PC-9 (cell line): ENCODE measurements at regions of chr20 and their contacts with region 1.

Region 1: DNA sequence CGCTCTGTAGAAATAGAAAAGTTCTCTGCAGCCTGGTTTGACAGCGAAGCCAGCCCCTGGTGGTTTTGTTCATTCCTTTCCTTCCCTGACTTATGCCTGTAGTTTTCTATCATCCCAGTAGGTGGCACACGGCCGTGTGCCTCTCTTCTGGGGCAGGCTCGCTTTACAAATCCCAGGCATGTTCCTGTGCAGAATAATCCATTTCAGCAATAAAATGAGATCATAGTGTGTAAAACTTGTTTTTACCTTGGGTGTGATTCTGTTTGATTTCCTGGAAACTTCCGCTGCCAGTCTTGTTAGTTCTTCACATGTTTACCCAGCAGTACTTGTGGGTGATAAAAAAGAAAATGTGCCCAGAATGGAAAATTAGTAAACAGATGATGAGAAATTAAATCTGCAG is 7.4 kb upstream of the INSM1 start:
- DNase-seq: peak in 1 of 2 experiments; percentile 21
- H3K4me3 ChIP-seq: no peak overlapping the region
- H3K27ac ChIP-seq: no peak overlapping the region
- H3K4me1 ChIP-seq: no peaks in the 10 kb centered on the region
- H3K27me3 ChIP-seq: peaks cover 12% of the 10 kb centered on the region
- CTCF ChIP-seq: peak; percentile 85

Region 2: DNA sequence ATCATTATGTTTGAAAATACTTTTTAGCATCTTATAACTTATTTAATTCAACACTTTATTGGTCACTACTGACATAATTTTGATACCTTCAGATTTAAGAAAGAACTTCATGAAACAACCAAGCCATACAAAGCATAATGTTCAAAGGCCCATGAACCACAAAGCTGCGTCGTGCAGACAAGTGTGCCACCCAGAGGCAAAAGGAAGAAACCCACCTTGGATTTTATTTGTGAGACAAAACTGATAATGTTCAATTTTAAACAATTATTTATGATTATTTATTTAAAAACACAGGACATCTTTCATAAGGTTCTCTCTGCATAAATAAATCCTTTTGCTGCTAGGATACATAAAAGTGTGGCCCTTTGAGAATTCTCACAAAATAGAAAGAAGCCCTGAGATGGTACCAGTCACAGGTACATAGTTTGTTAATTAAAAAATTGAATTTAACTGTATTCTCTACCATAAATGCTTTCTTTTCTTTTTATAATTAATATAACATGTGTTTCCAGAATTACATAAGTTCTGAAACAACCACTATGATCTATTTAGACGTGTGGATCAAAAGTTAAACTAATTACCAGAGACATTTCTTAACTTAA is 208.2 kb after region 1 on chr20:
- CTCF ChIA-PET with region 1: no interaction called
- POLR2A ChIA-PET with region 1: no interaction called
- intact Hi-C with region 1: loop called (anchors 1 kb)
- DNase-seq: peak; percentile 10 to 55
- H3K4me3 ChIP-seq: no peak overlapping the region
- H3K27ac ChIP-seq: no peak overlapping the region
- H3K4me1 ChIP-seq: no peaks in the 10 kb centered on the region
- H3K27me3 ChIP-seq: no peaks in the 10 kb centered on the region
- CTCF ChIP-seq: peak; percentile 89

Region 3: GRCh38 chr20:20824924-20825584 is 464.6 kb after region 1 on chr20:
- CTCF ChIA-PET with region 1: no interaction called
- POLR2A ChIA-PET with region 1: no interaction called
- intact Hi-C with region 1: loop called (anchors 1 kb)
- DNase-seq: peak in 1 of 2 experiments; percentile 42
- H3K4me3 ChIP-seq: no peak overlapping the region
- H3K27ac ChIP-seq: no peak overlapping the region
- H3K4me1 ChIP-seq: no peaks in the 10 kb centered on the region
- H3K27me3 ChIP-seq: peaks cover 59% of the 10 kb centered on the region
- CTCF ChIP-seq: peak; percentile 86